ENCODE measurements at regions of chr18 and their contacts with region 1.

Region 1: DNA sequence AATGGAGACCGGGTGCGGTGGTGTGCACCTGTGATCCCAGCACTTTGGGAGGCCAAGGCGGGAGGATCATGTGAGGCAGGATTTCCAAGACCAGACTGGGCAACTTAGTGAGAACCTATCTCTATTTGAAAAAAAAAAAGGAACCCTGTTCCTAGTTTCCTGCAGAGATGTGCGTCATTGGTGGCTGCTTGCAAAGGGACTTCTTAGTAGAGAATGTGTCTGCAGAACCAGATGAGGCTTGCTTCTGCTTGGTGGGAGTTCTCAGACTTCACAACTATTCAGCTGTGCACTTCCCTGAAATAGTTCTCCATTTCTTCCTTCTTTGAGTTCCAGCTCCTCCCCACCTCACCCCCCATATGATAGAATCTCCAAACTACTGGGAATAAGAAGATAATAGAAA is 22.3 kb downstream of the ZCCHC2 start:
- DNase-seq: no peak
- ATAC-seq: peak; percentile 61

Region 2: GRCh38 chr18:62339106-62339988 is 205.8 kb before region 1 on chr18:
- intact Hi-C with region 1: loop called (anchors 5 kb)
- DNase-seq: no peak
- ATAC-seq: no peak

Region 3: DNA sequence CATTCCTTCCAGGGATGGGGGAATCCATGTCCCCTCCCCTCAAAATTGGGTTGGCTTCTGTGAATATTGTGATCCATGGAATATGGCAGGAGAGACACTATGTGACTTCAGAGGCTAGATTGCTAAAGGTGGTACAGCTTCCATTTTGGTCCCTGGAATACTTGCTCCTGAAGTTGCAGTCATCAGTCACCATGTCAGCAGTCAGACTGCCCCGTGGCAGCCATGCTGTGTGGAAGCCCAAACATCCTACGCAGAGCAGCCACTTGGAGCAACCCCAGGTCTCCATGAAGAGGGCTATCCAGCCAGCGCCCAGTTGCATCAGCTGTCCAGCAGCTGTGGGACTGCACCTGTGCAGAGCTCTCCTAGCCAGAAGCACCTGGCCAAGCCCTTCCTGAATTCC is 837.7 kb after region 1 on chr18:
- intact Hi-C with region 1: no loop called
- DNase-seq: no peak
- ATAC-seq: no peak

Measured in sciatic nerve (tissue), 2 donors.